ENCODE measurements at regions of chr2 and their contacts with region 1.

Region 1: GRCh38 chr2:187499941-187500532 is 52.0 kb upstream of the CALCRL start:
- DNase-seq: peak in 2 of 3 donors; percentile 42 to 83
- ATAC-seq: peak; percentile 77
- H3K4me3 ChIP-seq: no peak overlapping the region
- H3K4me1 ChIP-seq: peaks cover 7% of the 10 kb centered on the region
- CTCF ChIP-seq: peak; percentile 54

Region 2: DNA sequence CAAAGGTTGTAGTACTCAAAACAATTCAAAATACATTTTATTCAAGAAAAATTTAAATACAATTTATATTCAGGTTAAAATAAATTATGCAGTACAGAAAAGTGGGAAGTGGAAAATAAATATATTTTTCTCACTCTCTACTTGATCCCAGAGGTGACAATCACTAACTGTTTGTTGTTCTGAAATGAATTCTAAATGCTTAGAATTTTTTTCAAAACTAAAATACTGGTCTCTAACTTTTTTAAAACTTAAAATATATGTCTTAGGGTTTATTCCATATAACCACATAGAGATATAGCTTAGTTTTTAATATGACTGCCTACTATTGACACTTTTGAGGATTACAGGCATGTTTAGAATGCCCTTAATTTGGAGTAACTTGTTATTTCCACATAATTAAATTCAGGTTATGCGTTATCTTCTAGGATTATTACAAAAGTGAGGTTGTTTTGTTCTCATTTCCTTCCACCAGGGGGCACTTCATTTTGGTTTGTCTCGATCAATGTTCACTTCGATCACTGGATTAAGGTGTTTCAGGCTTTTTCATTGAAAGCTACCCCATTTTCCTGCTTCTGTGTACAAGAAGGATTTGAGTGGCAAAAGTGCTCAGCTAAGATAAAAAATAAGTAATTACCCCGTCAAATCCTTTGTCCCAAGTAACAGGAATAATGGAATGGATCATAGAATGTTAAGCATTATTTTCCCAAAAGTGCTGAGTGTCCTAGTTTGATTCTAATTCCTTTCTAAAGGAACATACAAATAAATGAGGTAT is 81.3 kb after region 1 on chr2:
- intact Hi-C with region 1: loop called in 1 of 2 experiments (anchors 2 kb)
- DNase-seq: peak in 1 of 3 donors; percentile 46
- ATAC-seq: no peak
- H3K4me3 ChIP-seq: no peak overlapping the region
- H3K4me1 ChIP-seq: no peaks in the 10 kb centered on the region
- CTCF ChIP-seq: peak; percentile 47

Region 3: DNA sequence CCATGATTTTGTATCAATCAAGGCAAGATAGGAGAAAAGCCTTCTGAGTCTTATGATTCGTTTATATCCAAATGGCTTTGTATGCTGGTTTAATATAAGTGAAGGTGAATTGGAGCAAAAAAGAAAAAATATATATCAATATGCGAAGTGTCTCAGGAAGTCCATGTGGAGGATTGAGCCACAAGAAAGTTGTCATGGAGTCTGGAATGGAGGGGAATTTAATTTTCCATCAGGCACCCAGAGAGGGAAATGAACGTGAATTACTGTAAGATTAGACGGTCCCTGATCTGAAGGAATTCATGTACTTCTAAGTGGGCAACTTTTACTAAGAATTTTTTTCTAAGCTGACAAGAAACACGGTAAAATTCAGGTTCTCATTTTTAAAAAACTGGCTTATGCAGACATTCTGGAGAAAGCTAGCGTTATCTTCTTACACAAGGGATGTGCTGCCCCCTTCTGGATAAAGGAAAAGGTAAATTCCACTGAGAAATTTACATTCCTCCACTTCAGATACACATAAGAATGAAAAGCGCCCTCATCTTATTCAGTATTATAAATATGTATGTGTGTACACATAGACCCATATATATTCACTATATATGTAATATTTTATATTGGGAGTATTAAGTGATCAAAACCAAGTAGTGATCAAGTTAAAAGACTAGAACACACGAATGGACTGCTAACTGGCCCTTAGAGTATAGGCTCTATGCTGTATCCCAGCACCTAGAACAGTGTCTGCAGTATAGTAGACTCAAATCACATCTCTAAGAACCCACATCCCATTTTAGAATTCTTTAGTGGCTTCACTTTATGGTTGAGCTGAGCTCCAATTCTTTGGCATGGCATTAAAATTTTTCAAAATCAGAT is 343.2 kb after region 1 on chr2:
- intact Hi-C with region 1: loop called in 1 of 2 experiments (anchors 10 kb)
- DNase-seq: peak in 1 of 3 donors; percentile 39
- ATAC-seq: peak; percentile 28
- H3K4me3 ChIP-seq: no peak overlapping the region
- H3K4me1 ChIP-seq: no peaks in the 10 kb centered on the region
- CTCF ChIP-seq: peak; percentile 10